ENCODE measurements at regions of chr7 and their contacts with region 1.

Region 1: GRCh38 chr7:56074371-56074791 is 10.3 kb downstream of the SUMF2 start:
- DNase-seq: peak; percentile 91
- H3K4me3 ChIP-seq: no peak overlapping the region
- H3K27ac ChIP-seq: no peak overlapping the region
- H3K4me1 ChIP-seq: peaks cover 12% of the 10 kb centered on the region
- H3K27me3 ChIP-seq: no peaks in the 10 kb centered on the region
- CTCF ChIP-seq: peak; percentile 91 to 95
- POLR2A ChIP-seq: no peak

Region 2: GRCh38 chr7:55794527-55794926 is 279.9 kb before region 1 on chr7:
- CTCF ChIA-PET with region 1: no interaction called
- POLR2A ChIA-PET with region 1: no interaction called
- dilution Hi-C with region 1: no loop called
- intact Hi-C with region 1: no loop called
- DNase-seq: no peak
- H3K4me3 ChIP-seq: no peak overlapping the region
- H3K27ac ChIP-seq: no peak overlapping the region
- H3K4me1 ChIP-seq: no peaks in the 10 kb centered on the region
- H3K27me3 ChIP-seq: no peaks in the 10 kb centered on the region
- CTCF ChIP-seq: no peak
- POLR2A ChIP-seq: no peak

Region 3: DNA sequence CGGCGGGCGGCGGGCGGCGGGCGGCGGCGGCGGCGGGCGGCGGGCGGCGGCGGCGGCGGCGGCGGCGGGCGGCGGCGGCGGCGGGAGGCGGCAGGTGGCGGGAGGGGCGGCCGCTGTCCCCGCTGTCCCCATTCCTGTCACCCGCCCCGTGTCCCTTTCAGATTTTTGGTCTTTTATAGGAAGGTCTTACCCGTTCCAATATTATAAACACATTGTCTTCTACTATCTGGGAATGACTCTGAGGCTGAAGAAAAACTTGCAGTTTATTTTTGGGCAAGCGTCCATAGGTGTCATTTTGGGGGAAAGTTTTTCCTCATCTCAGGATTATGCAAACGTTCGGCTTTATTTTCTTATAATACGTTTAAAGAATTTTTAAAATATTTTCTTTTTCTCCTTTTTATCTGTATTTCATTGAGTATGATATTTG is 186.5 kb before region 1 on chr7:
- CTCF ChIA-PET with region 1: no interaction called
- POLR2A ChIA-PET with region 1: no interaction called
- dilution Hi-C with region 1: no loop called
- intact Hi-C with region 1: loop called (anchors 5 kb)
- DNase-seq: no peak
- H3K4me3 ChIP-seq: peak overlapping the region; percentile 59 to 94 (median 90)
- H3K27ac ChIP-seq: peak overlapping the region; percentile 60
- H3K4me1 ChIP-seq: peaks cover 2% of the 10 kb centered on the region
- H3K27me3 ChIP-seq: no peaks in the 10 kb centered on the region
- CTCF ChIP-seq: no peak
- POLR2A ChIP-seq: no peak

Region 4: DNA sequence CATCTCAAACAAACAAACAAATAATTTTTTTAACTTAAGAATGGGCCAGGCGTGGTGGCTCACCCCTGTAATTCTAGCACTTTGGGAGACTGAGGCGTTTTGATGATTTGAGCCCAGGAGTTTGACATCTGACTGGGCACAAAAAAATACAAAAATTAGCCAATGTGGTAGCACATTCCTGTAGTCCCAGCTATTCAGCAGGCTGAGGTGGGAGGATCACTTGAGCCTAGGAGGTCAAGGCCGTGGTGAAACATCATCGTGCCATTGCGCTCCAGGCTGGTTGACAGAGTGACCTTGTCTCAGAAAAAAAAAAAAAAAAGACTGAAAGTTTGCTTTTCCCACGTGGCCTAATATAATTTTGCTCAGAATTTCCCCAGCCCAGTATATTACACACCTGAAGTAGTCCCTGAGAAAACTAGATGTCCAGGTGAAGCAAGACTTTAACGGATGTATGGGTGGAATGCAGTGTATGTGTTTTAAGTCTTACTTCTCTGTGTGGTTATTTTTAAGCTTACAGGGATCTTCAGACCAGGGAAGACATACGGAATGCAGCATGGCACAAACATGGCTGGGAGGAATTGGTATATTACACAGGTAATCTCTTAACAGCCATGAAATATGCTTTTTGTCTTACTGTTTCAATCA is 77.4 kb before region 1 on chr7:
- CTCF ChIA-PET with region 1: interaction called, 30 read pairs
- POLR2A ChIA-PET with region 1: no interaction called
- dilution Hi-C with region 1: no loop called
- intact Hi-C with region 1: no loop called
- DNase-seq: no peak
- H3K4me3 ChIP-seq: no peak overlapping the region
- H3K27ac ChIP-seq: no peak overlapping the region
- H3K4me1 ChIP-seq: peaks cover 10% of the 10 kb centered on the region
- H3K27me3 ChIP-seq: no peaks in the 10 kb centered on the region
- CTCF ChIP-seq: no peak
- POLR2A ChIP-seq: no peak

Region 5: DNA sequence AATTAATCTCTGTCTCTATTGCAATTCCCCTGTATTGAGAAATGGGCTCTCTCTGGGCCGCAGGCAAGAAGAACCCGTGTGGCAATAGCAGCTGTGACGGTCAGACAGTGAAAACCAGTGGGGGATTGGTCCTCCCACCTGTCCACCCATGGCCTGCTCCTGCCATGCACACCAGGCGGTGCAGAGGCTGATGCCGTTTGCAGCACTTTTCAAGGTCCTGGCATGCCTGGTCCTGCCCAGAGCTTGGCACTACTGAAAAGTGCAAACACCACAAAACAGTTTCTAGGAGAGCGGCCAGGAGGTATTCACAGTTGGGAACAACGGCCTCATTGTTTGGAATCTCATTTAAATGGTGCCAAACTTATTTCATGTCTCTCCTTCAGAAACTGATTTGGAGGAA is 64.7 kb before region 1 on chr7:
- CTCF ChIA-PET with region 1: interaction called, 100 read pairs
- POLR2A ChIA-PET with region 1: no interaction called
- dilution Hi-C with region 1: no loop called
- intact Hi-C with region 1: loop called (anchors 1 kb)
- DNase-seq: no peak
- H3K4me3 ChIP-seq: no peak overlapping the region
- H3K27ac ChIP-seq: no peak overlapping the region
- H3K4me1 ChIP-seq: no peaks in the 10 kb centered on the region
- H3K27me3 ChIP-seq: no peaks in the 10 kb centered on the region
- CTCF ChIP-seq: no peak
- POLR2A ChIP-seq: no peak

Region 6: DNA sequence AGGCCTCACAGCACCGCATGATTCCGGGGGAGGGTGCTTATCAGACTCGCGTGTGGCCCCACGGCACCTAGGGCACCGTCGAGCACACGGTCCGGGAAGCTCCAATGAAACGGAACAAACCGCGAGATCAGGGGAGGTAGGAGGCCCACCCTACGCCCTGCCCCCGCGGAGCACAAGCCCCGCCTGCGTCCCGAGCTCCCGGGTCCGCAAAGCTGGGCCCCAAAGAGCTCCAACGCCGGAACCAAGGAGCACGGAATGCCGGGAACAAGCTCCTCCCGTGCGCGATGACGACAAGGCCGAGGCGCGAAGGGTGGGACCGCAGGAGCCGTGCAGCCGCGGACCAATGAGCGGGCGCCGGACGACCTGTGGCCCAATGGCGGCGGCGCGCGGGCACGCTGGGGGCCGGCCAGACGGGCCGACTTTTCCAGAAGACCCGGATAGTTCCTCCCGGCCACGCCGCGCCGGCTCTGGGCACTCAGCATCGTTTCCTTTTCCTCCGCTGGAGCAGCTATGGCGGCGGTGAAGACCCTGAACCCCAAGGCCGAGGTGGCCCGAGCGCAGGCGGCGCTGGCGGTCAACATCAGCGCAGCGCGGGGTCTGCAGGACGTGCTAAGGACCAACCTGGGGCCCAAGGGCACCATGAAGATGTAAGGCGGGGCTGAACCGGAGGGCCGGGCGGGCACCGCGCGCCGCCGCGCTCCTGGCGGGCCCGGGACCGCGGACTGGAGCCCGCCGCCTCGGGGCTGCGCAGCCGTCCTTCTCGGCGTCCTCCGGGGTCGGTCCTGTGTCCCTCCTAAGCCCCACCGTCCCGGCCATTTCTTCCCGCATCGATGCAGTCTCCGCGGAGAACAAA is 22.8 kb before region 1 on chr7 and contains the starts of genes CCT6A and PSPH:
- CTCF ChIA-PET with region 1: interaction called, 17 read pairs
- POLR2A ChIA-PET with region 1: interaction called, 8 read pairs
- dilution Hi-C with region 1: no loop called
- intact Hi-C with region 1: no loop called
- DNase-seq: peak; percentile 99
- H3K4me3 ChIP-seq: peak within 1 kb of the TSS; percentile 86 to 99 (median 88)
- H3K27ac ChIP-seq: peak within 1 kb of the TSS; percentile 83
- H3K4me1 ChIP-seq: peaks cover 45% of the 10 kb centered on the region
- H3K27me3 ChIP-seq: no peaks in the 10 kb centered on the region
- CTCF ChIP-seq: no peak
- POLR2A ChIP-seq: peak; percentile 88
- total RNA-seq, gene CCT6A: 210 and 221 TPM in 2 replicates
- total RNA-seq, gene PSPH: 20.3 and 24.2 TPM in 2 replicates

Region 7: GRCh38 chr7:56092789-56093531 is 18.6 kb after region 1 on chr7 and contains the start of gene PHKG1:
- CTCF ChIA-PET with region 1: interaction called, 49 read pairs
- POLR2A ChIA-PET with region 1: no interaction called
- dilution Hi-C with region 1: no loop called
- intact Hi-C with region 1: loop called (anchors 2 kb)
- DNase-seq: peak; percentile 80
- H3K4me3 ChIP-seq: no peak within 1 kb of the TSS
- H3K27ac ChIP-seq: no peak within 1 kb of the TSS
- H3K4me1 ChIP-seq: peaks cover 3% of the 10 kb centered on the region
- H3K27me3 ChIP-seq: no peaks in the 10 kb centered on the region
- CTCF ChIP-seq: peak; percentile 36 to 74
- POLR2A ChIP-seq: no peak
- total RNA-seq, gene PHKG1: 0.72 and 1.00 TPM in 2 replicates